Posterior vena cava (tissue), 2 donors: ENCODE measurements at regions of chr20 and their contacts with region 1.

Region 1: DNA sequence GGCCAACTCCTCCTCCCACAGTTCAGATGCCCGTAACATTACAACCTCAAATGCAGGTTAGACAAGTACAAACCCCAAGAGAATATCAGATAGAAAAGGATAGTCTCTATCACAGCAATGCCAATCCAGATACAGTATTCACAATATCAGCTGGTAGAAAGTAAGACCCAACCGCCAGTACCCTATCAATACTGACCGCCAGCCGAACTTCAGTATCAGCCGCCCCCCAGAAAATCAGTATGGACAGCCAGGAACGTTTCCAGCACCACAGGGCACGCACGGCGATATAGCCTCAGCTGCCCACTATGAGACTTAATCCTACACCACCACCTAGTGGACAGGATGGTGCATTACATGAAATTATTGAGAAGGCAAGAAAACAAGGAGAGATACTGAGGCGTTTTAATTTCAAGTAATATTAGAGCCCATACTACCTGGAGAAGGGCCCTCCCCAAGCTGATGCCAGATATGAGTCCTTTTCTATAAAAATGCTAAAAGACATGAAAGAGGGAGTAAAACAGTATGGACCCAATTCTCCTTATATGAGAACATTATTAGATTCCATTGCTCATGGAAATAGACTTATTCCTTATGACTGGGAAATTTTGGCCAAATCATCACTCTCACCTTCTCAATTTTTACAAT is 17.6 kb upstream of the EIF2S2 start:
- DNase-seq: no peak

Region 2: DNA sequence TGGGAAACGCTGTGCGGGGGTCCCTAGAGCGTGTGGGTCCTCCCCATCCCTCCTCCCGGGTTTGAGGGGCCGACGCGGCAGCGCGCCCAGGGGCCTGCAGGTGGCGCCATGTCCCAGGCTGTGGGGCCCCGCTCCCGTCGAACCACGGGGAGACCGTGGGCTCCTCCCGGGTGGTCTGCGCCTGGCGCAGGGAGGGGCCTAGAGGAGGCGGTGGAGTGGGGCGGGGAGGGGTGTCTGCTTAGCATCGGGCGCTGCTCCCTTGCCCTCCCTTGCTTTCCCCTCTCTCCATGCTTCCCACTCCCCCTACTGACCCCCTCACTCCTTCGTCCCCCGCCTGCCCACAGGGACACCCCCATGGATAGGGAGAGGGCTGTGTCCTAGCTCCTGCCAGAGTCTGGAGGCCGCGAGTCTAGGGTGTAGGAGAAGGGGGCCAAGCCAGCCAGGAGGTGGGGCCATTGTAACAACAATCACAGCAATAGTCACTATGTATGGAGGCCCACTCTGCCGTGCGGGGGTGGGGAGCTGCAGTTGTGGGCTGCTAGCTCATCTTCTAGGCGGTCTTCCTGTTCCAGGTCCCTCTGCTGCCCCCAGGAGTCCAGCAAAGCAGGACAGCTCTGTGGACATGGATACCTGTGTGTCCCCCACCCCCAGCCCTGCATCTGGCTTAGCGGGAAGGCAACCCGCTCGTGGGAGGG is 266.8 kb before region 1 on chr20:
- intact Hi-C with region 1: loop called (anchors 5 to 10 kb)
- DNase-seq: peak; percentile 85

Region 3: GRCh38 chr20:33933469-33933909 is 196.2 kb before region 1 on chr20:
- intact Hi-C with region 1: loop called in 1 of 2 experiments (anchors 5 kb)
- DNase-seq: no peak

Region 4: DNA sequence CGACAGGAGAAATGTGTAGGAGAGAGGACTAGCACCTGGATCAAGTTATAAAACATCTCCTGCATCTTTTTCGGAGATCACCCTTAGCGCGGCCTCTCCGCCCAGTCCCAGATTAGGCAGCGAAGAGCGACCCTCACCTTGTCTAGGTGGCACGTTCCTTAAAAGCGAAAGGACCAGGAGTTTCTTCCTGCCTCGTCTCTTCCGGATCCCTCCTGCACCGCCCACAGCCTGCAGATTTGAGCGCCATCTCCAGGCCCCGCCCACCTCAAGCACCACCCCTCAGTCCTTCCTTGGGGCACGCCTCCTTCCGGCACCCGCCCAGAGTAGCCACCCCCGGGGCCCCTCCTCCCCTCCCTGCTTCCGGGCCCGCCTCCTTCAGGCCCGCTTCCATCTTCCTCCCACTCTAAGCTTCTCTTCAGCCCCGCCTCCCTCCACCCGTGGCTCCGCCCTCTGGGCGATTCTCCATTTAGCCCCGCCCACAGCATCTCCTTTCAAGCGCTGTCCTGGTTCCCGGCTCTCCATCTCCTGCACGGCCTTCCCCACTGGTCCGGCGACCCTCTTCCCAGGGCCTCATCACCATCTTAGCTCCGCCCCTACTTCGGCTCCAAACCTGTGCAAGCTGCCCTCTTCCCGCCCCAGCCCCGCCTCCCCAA is 136.6 kb before region 1 on chr20:
- intact Hi-C with region 1: loop called in 1 of 2 experiments (anchors 2 kb)
- DNase-seq: peak; percentile 100